PC-3 (cell line): ENCODE measurements at regions of chr1 and their contacts with region 1.

Region 1: GRCh38 chr1:204806943-204807687 is 63.5 kb upstream of the NFASC start:
- DNase-seq: peak; percentile 98
- ATAC-seq: peak; percentile 97
- H3K4me3 ChIP-seq: peak overlapping the region; percentile 67
- H3K27ac ChIP-seq: no peak overlapping the region
- H3K4me1 ChIP-seq: peaks cover 5% of the 10 kb centered on the region; the same call in 1 of the 2 replicates
- H3K27me3 ChIP-seq: 0 out of 2 replicates have a peak, but pooled peaks cover 3% of the 10 kb centered on the region
- CTCF ChIP-seq: peak; percentile 100

Region 2: GRCh38 chr1:204431310-204432165 is 375.6 kb before region 1 on chr1:
- CTCF ChIA-PET with region 1: no interaction called
- POLR2A ChIA-PET with region 1: no interaction called
- intact Hi-C with region 1: loop called (anchors 10 kb)
- DNase-seq: peak; percentile 93
- ATAC-seq: peak; percentile 96
- H3K4me3 ChIP-seq: no peak overlapping the region
- H3K27ac ChIP-seq: no peak overlapping the region
- H3K4me1 ChIP-seq: peaks cover 10% of the 10 kb centered on the region
- H3K27me3 ChIP-seq: no peaks in the 10 kb centered on the region
- CTCF ChIP-seq: peak; percentile 100

Region 3: GRCh38 chr1:204565617-204566582 is 241.2 kb before region 1 on chr1:
- CTCF ChIA-PET with region 1: interaction called, 103 read pairs
- POLR2A ChIA-PET with region 1: no interaction called
- intact Hi-C with region 1: loop called (anchors 1 kb)
- DNase-seq: peak; percentile 96
- ATAC-seq: peak; percentile 78
- H3K4me3 ChIP-seq: peak overlapping the region; percentile 6; the same call in 1 of the 2 replicates
- H3K27ac ChIP-seq: peak overlapping the region; percentile 54
- H3K4me1 ChIP-seq: peaks cover 35% of the 10 kb centered on the region
- H3K27me3 ChIP-seq: no peaks in the 10 kb centered on the region
- CTCF ChIP-seq: peak; percentile 99

Region 4: GRCh38 chr1:204572931-204573891 is 233.9 kb before region 1 on chr1:
- CTCF ChIA-PET with region 1: interaction called, 16 read pairs
- POLR2A ChIA-PET with region 1: no interaction called
- intact Hi-C with region 1: no loop called
- DNase-seq: peak; percentile 98
- ATAC-seq: peak; percentile 72
- H3K4me3 ChIP-seq: peak overlapping the region; percentile 24; the same call in 1 of the 2 replicates
- H3K27ac ChIP-seq: peak overlapping the region; percentile 89
- H3K4me1 ChIP-seq: peaks cover 53% of the 10 kb centered on the region
- H3K27me3 ChIP-seq: no peaks in the 10 kb centered on the region
- CTCF ChIP-seq: no peak

Region 5: GRCh38 chr1:204763706-204764427 is 43.2 kb before region 1 on chr1:
- CTCF ChIA-PET with region 1: interaction called, 14 read pairs
- POLR2A ChIA-PET with region 1: no interaction called
- intact Hi-C with region 1: no loop called
- DNase-seq: peak; percentile 98
- ATAC-seq: peak; percentile 93
- H3K4me3 ChIP-seq: no peak overlapping the region
- H3K27ac ChIP-seq: no peak overlapping the region
- H3K4me1 ChIP-seq: peaks cover 12% of the 10 kb centered on the region
- H3K27me3 ChIP-seq: peaks cover 15% of the 10 kb centered on the region
- CTCF ChIP-seq: peak; percentile 100

Region 6: GRCh38 chr1:204791453-204792353 is 15.4 kb before region 1 on chr1:
- CTCF ChIA-PET with region 1: interaction called, 21 read pairs
- POLR2A ChIA-PET with region 1: no interaction called
- intact Hi-C with region 1: no loop called
- DNase-seq: peak; percentile 83
- ATAC-seq: peak; percentile 86
- H3K4me3 ChIP-seq: no peak overlapping the region
- H3K27ac ChIP-seq: no peak overlapping the region
- H3K4me1 ChIP-seq: no peaks in the 10 kb centered on the region
- H3K27me3 ChIP-seq: peaks cover 28% of the 10 kb centered on the region
- CTCF ChIP-seq: peak; percentile 99

Region 7: DNA sequence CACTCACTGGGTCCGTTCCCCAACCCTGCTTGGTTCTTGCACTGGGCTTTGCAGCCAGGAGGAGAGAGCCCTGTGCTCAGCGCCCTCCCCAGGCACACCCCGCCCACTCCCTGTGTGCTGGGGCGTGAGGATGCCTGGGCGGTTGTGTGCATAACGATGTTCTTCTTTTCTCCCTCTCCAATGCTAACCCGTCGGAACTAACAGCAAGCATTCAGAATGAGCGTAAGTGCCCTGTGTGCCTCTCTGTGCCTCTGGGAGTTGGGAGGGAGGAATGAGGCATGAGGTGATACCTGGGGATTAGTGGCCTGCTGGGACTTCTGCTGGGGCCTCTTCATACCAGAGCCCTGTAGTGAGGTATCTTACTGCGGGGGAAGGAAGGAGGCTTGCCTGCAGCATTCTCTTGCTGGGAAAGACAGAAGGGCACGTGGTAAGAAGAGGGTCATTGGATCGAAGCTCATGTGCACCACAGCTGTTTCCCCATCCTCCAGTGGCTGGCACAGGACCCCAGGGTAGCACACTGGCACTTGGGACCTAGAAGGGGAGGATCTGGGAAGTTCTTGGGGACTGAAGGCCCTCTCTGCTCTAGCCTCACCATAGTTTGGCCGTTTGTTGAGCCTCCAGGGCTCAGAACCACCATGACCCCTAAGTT is 143.4 kb after region 1 on chr1:
- CTCF ChIA-PET with region 1: no interaction called
- POLR2A ChIA-PET with region 1: no interaction called
- intact Hi-C with region 1: no loop called
- DNase-seq: no peak
- ATAC-seq: no peak
- H3K4me3 ChIP-seq: no peak overlapping the region
- H3K27ac ChIP-seq: no peak overlapping the region
- H3K4me1 ChIP-seq: no peaks in the 10 kb centered on the region
- H3K27me3 ChIP-seq: peaks cover 86% of the 10 kb centered on the region
- CTCF ChIP-seq: no peak

Region 8: GRCh38 chr1:205061665-205062069 is 254.6 kb after region 1 on chr1:
- CTCF ChIA-PET with region 1: interaction called, 8 read pairs
- POLR2A ChIA-PET with region 1: no interaction called
- intact Hi-C with region 1: loop called (anchors 5 kb)
- DNase-seq: peak; percentile 97
- ATAC-seq: peak; percentile 86
- H3K4me3 ChIP-seq: no peak overlapping the region
- H3K27ac ChIP-seq: no peak overlapping the region
- H3K4me1 ChIP-seq: no peaks in the 10 kb centered on the region
- H3K27me3 ChIP-seq: peaks cover 8% of the 10 kb centered on the region; the same call in 1 of the 2 replicates
- CTCF ChIP-seq: peak; percentile 99